Naive thymus-derived CD4-positive, alpha-beta T cell (primary cell): ENCODE measurements at regions of chr4 and their contacts with region 1.

Region 1: DNA sequence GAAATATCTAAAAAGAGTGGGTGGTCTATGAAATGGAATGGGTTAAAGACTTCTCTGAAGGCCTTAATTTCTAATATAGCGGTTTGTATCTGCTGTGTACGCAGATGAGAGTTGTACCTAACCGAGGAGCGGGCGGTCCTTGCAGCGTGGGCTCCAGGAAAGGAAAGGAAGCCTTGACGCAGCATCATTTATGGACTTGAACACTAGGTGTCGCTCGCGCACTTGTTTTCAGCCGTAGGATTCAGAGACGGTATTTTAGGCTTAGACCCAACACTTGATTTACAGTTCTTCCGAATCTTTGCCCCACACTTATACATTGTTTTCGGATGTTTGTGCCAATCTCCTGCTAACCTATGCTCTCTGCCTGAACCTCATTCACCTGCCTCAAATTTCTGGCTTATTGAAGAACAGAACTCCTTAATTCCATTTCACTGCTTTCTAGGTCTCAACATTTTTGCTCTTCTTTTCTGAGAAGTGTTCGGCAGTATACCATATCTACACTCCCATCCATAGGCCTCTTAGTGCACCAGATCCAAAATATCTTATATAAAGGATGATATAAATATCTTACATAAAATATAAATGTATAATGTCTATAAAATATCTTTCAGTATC is 48.9 kb upstream of the AADAT start:
- DNase-seq: peak; percentile 2 to 58 (median 41)
- ATAC-seq: peak; percentile 67
- H3K4me3 ChIP-seq: no peak overlapping the region
- H3K4me3 Mint-ChIP-seq: no peak overlapping the region
- H3K27ac ChIP-seq: no peak overlapping the region
- H3K27ac Mint-ChIP-seq: no peak overlapping the region
- H3K4me1 ChIP-seq: no peaks in the 10 kb centered on the region
- H3K4me1 Mint-ChIP-seq: peaks cover 0 to 7% (median 5%) of the 10 kb centered on the region in 7 donors
- H3K27me3 ChIP-seq: no peaks in the 10 kb centered on the region
- H3K27me3 Mint-ChIP-seq: peaks cover 0 to 7% (median 0%) of the 10 kb centered on the region in 5 donors

Region 2: GRCh38 chr4:168150420-168151050 is 1988.2 kb before region 1 on chr4:
- CTCF ChIA-PET with region 1: no interaction called
- POLR2A ChIA-PET with region 1: no interaction called
- intact Hi-C with region 1: no loop called
- DNase-seq: no peak
- ATAC-seq: no peak
- H3K4me3 ChIP-seq: no peak overlapping the region
- H3K4me3 Mint-ChIP-seq: no peak overlapping the region
- H3K27ac ChIP-seq: no peak overlapping the region
- H3K27ac Mint-ChIP-seq: no peak overlapping the region
- H3K4me1 ChIP-seq: no peaks in the 10 kb centered on the region
- H3K4me1 Mint-ChIP-seq: peaks cover 0 to 9% (median 5%) of the 10 kb centered on the region in 7 donors
- H3K27me3 ChIP-seq: no peaks in the 10 kb centered on the region
- H3K27me3 Mint-ChIP-seq: peaks cover 0 to 6% (median 4%) of the 10 kb centered on the region in 5 donors

Region 3: DNA sequence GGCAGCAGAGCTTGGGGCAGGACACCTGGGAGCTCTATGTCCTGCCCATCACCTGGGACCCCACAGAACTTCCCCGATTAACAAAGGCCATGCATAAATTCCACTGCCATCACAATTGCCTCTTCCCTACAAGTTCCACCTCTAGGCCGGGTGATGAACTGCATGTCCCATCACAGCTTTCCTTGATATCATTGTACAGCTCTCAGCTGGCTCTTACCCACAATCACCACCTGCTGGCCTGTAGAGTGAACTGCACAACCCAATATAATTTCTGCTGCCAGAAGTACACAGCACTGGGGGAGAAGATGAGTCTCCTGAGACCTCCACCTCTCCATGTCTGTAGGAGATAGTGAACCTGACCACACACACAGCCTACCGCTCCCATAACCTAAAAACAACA is 236.1 kb after region 1 on chr4:
- CTCF ChIA-PET with region 1: no interaction called
- POLR2A ChIA-PET with region 1: no interaction called
- intact Hi-C with region 1: loop called in 1 of 2 experiments (anchors 1 kb)
- DNase-seq: no peak
- ATAC-seq: no peak
- H3K4me3 ChIP-seq: no peak overlapping the region
- H3K4me3 Mint-ChIP-seq: no peak overlapping the region
- H3K27ac ChIP-seq: no peak overlapping the region
- H3K27ac Mint-ChIP-seq: no peak overlapping the region
- H3K4me1 ChIP-seq: no peaks in the 10 kb centered on the region
- H3K4me1 Mint-ChIP-seq: no peaks in the 10 kb centered on the region
- H3K27me3 ChIP-seq: no peaks in the 10 kb centered on the region
- H3K27me3 Mint-ChIP-seq: no peaks in the 10 kb centered on the region

Region 4: DNA sequence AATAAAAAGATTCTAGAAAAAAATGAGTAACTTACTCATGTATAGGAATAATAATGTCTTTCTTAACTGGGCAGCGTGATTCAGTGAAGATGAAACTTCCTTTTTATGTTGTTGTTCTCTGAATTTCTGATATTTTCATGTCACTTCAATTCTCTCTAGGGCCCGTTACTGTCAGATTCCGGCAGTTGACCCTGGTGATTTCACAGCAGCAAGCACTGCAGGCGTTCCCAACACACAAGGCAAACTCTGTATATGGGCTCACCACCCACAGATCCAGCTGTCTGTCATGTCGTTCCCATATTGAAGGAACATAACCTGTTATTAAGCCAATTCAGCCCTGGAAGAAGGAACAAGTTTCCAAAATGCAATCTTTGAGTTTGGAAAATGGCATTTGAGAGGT is 1386.2 kb after region 1 on chr4:
- CTCF ChIA-PET with region 1: no interaction called
- POLR2A ChIA-PET with region 1: no interaction called
- intact Hi-C with region 1: no loop called
- DNase-seq: no peak
- ATAC-seq: no peak
- H3K4me3 ChIP-seq: no peak overlapping the region
- H3K4me3 Mint-ChIP-seq: no peak overlapping the region
- H3K27ac ChIP-seq: no peak overlapping the region
- H3K27ac Mint-ChIP-seq: no peak overlapping the region
- H3K4me1 ChIP-seq: no peaks in the 10 kb centered on the region
- H3K4me1 Mint-ChIP-seq: no peaks in the 10 kb centered on the region
- H3K27me3 ChIP-seq: no peaks in the 10 kb centered on the region
- H3K27me3 Mint-ChIP-seq: no peaks in the 10 kb centered on the region